ENCODE measurements at regions of chr12 and their contacts with region 1.

Region 1: GRCh38 chr12:83603106-83603505 is 916.4 kb downstream of the TMTC2 start:
- DNase-seq: no peak
- ATAC-seq: no peak
- H3K4me3 ChIP-seq: no peak overlapping the region
- H3K27ac ChIP-seq: no peak overlapping the region
- H3K4me1 ChIP-seq: no peaks in the 10 kb centered on the region
- H3K27me3 ChIP-seq: no peaks in the 10 kb centered on the region
- CTCF ChIP-seq: no peak
- POLR2A ChIP-seq: no peak
- RAD21 ChIP-seq: no peak

Region 2: GRCh38 chr12:82351390-82351789 is 1251.7 kb before region 1 on chr12:
- CTCF ChIA-PET with region 1: no interaction called
- POLR2A ChIA-PET with region 1: no interaction called
- dilution Hi-C with region 1: no loop called
- in situ Hi-C with region 1: no loop called
- intact Hi-C with region 1: no loop called
- DNase-seq: no peak
- ATAC-seq: no peak
- H3K4me3 ChIP-seq: no peak overlapping the region
- H3K27ac ChIP-seq: no peak overlapping the region
- H3K4me1 ChIP-seq: no peaks in the 10 kb centered on the region
- H3K27me3 ChIP-seq: no peaks in the 10 kb centered on the region
- CTCF ChIP-seq: no peak
- POLR2A ChIP-seq: no peak
- RAD21 ChIP-seq: no peak

Region 3: GRCh38 chr12:82810568-82810967 is 792.5 kb before region 1 on chr12:
- CTCF ChIA-PET with region 1: no interaction called
- POLR2A ChIA-PET with region 1: no interaction called
- dilution Hi-C with region 1: no loop called
- in situ Hi-C with region 1: no loop called
- intact Hi-C with region 1: loop called (anchors 5 kb)
- DNase-seq: no peak
- ATAC-seq: no peak
- H3K4me3 ChIP-seq: no peak overlapping the region
- H3K27ac ChIP-seq: no peak overlapping the region
- H3K4me1 ChIP-seq: no peaks in the 10 kb centered on the region
- H3K27me3 ChIP-seq: no peaks in the 10 kb centered on the region
- CTCF ChIP-seq: no peak
- POLR2A ChIP-seq: no peak
- RAD21 ChIP-seq: no peak

Region 4: GRCh38 chr12:84172823-84173424 is 569.8 kb after region 1 on chr12:
- CTCF ChIA-PET with region 1: no interaction called
- POLR2A ChIA-PET with region 1: no interaction called
- dilution Hi-C with region 1: no loop called
- in situ Hi-C with region 1: no loop called
- intact Hi-C with region 1: no loop called
- DNase-seq: no peak
- ATAC-seq: no peak
- H3K4me3 ChIP-seq: no peak overlapping the region
- H3K27ac ChIP-seq: no peak overlapping the region
- H3K4me1 ChIP-seq: no peaks in the 10 kb centered on the region
- H3K27me3 ChIP-seq: no peaks in the 10 kb centered on the region
- CTCF ChIP-seq: no peak
- POLR2A ChIP-seq: no peak
- RAD21 ChIP-seq: no peak

Measured in IMR-90 (cell line).